Endothelial cell of umbilical vein (primary cell): ENCODE measurements at regions of chr15 and their contacts with region 1.

Region 1: DNA sequence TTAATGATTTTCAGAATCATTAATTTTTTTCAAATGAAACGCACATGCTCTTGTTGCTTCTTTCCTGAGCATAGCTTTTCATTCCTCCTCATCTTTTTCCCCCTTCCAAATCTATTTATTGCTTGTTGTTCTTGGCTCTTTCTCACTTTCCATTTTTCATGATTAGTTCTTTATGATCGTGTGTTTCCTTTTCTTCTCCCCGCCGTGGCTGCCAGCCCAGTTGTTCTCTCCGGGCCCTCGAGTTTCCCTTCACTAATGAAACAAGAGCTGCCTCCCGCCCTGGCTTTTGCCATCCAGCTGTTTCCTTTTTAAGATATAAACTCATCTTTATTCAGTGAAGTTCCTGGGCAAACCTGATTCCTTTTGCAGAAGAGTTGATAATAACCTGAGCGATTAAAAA is 170.2 kb upstream of the NR2F2 start:
- DNase-seq: peak; percentile 95
- H3K4me3 ChIP-seq: peak overlapping the region in 1 of 3 experiments; percentile 26
- H3K27ac ChIP-seq: peak overlapping the region; percentile 28
- H3K4me1 ChIP-seq: peaks cover 33% of the 10 kb centered on the region
- H3K27me3 ChIP-seq: no peaks in the 10 kb centered on the region
- CTCF ChIP-seq: no peak
- POLR2A ChIP-seq: no peak

Region 2: DNA sequence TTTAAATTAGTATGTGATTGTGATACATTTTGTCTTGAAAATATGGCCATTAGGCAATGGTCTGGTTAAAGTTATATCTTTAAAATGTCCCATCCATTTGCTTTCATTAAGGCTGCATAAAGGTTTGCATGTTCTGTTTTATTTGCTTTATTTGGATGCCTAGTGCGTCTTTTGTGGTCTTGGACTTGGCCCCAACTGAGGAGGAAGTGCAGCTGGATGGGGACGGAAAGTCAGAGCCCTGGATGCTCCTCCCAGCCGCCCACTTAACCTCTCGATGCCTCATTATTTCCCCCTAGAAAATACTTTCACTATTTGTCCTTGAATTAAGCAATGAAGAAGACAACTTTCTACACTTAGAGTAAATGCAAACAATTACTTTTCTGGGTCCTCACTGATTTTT is 1030.7 kb before region 1 on chr15:
- CTCF ChIA-PET with region 1: no interaction called
- POLR2A ChIA-PET with region 1: no interaction called
- dilution Hi-C with region 1: no loop called
- intact Hi-C with region 1: loop called (anchors 5 kb)
- DNase-seq: peak; percentile 16
- H3K4me3 ChIP-seq: no peak overlapping the region
- H3K27ac ChIP-seq: no peak overlapping the region
- H3K4me1 ChIP-seq: peaks cover 28% of the 10 kb centered on the region
- H3K27me3 ChIP-seq: no peaks in the 10 kb centered on the region
- CTCF ChIP-seq: no peak
- POLR2A ChIP-seq: no peak

Region 3: DNA sequence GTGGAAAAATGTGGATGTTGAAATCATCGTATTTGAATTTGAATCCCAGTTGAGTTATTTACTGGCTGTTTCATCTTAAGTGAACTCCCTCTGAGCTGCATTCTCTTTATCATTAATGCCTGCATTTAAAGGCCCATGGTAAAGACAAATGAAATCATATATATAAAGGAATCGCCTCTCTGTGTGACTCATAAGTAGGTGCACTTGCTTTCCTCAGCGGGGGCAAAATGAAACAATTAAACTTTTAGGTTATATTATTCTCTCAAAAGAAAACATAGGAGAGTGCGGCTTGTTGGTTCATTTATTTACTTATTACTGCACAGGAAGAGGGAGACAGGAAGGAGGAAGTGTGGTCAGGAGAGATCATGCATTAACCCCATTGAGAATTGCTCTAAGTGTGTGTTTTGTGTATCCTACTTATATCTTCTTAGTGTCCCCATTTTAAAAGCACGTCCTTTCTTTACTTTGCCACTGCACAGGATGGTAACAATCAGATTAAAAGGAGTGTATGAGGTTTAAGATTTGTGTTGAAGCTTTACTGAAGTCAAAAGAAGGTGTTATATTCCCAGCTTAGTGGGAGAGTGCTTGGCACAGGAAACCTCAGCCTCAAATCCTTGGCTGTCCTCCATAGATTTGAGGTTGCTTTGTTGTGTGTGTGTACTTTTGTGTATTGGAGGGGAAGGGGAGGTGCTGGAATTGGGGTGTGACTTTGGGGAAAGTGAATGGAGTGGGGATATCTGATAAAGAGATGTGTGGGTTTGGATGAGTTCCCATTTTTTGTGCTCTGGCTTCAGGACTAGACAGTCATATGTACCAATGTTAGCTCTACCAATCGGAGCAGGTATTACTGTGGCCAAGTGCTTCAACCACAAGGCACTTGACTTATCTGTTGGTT is 425.6 kb before region 1 on chr15:
- CTCF ChIA-PET with region 1: no interaction called
- POLR2A ChIA-PET with region 1: no interaction called
- dilution Hi-C with region 1: no loop called
- intact Hi-C with region 1: loop called (anchors 1 kb)
- DNase-seq: peak; percentile 96
- H3K4me3 ChIP-seq: no peak overlapping the region
- H3K27ac ChIP-seq: peak overlapping the region; percentile 70
- H3K4me1 ChIP-seq: peaks cover 28% of the 10 kb centered on the region
- H3K27me3 ChIP-seq: no peaks in the 10 kb centered on the region
- CTCF ChIP-seq: no peak
- POLR2A ChIP-seq: peak; percentile 50

Region 4: DNA sequence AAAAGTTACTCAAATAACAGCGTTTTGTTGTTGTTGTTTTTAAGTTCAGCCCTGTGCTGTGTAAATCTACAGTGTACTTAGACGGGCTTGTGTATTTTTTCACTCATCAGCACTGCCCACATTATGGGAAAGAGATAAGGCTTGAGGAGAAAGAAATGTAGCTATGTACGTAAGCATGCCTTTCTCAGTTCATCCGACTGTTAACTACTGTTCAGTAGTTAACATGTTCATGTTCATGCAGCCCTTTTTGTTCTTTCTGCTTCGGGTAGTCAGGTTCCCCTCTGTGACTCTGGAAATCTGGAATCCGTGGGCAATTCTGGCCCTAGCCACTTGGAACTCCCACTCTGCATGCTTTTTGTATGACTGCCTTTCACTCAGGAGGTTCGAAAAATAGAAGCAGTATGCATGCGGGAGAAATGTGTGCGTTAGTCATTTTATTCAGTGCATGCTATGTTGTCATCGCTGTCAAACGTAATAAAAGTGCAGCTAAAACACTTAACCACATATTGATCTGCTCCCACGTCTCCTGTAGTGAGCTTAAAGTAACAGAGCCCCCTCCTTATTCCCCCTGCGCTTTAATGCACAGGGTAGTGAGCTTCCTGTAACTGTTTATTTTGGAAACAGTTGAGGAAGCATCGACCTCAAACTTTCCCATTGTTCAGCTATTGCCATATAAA is 112.9 kb before region 1 on chr15:
- CTCF ChIA-PET with region 1: interaction called, 3 read pairs
- POLR2A ChIA-PET with region 1: no interaction called
- dilution Hi-C with region 1: no loop called
- intact Hi-C with region 1: loop called (anchors 1 kb)
- DNase-seq: peak; percentile 83
- H3K4me3 ChIP-seq: peak overlapping the region in 1 of 3 experiments; percentile 13
- H3K27ac ChIP-seq: no peak overlapping the region
- H3K4me1 ChIP-seq: peaks cover 14% of the 10 kb centered on the region
- H3K27me3 ChIP-seq: peaks cover 0 to 1% of the 10 kb centered on the region in 2 experiments
- CTCF ChIP-seq: no peak
- POLR2A ChIP-seq: no peak

Region 5: GRCh38 chr15:96066852-96067490 is 93.3 kb before region 1 on chr15:
- CTCF ChIA-PET with region 1: no interaction called
- POLR2A ChIA-PET with region 1: no interaction called
- dilution Hi-C with region 1: no loop called
- intact Hi-C with region 1: no loop called
- DNase-seq: no peak
- H3K4me3 ChIP-seq: no peak overlapping the region
- H3K27ac ChIP-seq: no peak overlapping the region
- H3K4me1 ChIP-seq: no peaks in the 10 kb centered on the region
- H3K27me3 ChIP-seq: no peaks in the 10 kb centered on the region
- CTCF ChIP-seq: no peak
- POLR2A ChIP-seq: no peak

Region 6: GRCh38 chr15:96150254-96150653 is 10.0 kb before region 1 on chr15:
- CTCF ChIA-PET with region 1: no interaction called
- POLR2A ChIA-PET with region 1: no interaction called
- dilution Hi-C with region 1: no loop called
- intact Hi-C with region 1: no loop called
- DNase-seq: no peak
- H3K4me3 ChIP-seq: no peak overlapping the region
- H3K27ac ChIP-seq: no peak overlapping the region
- H3K4me1 ChIP-seq: no peaks in the 10 kb centered on the region
- H3K27me3 ChIP-seq: no peaks in the 10 kb centered on the region
- CTCF ChIP-seq: no peak
- POLR2A ChIP-seq: no peak

Region 7: GRCh38 chr15:96234109-96234892 is 74.0 kb after region 1 on chr15:
- CTCF ChIA-PET with region 1: interaction called, 4 read pairs
- POLR2A ChIA-PET with region 1: no interaction called
- dilution Hi-C with region 1: no loop called
- intact Hi-C with region 1: loop called (anchors 1 kb)
- DNase-seq: no peak
- H3K4me3 ChIP-seq: no peak overlapping the region
- H3K27ac ChIP-seq: no peak overlapping the region
- H3K4me1 ChIP-seq: peaks cover 15% of the 10 kb centered on the region
- H3K27me3 ChIP-seq: no peaks in the 10 kb centered on the region
- CTCF ChIP-seq: no peak
- POLR2A ChIP-seq: no peak

Region 8: DNA sequence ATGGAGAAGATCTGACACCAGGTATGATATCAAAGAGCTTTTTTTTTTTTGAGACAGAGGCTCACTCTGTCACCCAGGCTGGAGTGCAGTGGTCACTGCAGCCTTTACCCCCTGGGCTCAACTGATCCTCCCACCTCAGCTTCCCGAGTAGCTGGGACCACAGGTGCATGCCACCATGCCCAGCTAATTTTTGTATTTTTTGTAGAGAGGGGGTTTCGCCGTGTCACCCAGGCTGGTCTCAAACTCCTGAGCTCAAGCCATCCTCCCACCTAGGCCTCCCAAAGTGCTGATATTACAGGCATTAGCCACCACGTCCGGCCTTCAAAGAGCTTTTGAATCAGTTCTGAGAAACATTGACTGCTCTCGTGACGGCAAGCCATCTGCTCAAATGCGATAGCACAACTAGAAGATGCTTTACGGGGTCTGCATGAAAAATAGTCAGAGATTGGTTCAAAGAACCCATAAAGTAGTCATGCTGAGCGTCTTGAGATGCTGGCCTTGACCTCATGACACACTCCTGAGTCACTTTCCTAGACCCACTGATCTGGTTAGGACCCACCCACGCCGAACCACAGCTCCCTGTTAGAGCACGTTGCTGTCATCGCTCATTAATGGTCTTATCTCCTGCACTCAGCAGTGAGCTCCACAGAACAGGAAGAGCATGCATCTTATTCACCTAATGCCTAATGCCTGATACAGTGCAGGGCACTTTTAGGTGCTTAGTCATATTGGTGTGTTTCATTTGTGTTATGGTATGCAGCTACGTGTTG is 113.2 kb after region 1 on chr15:
- CTCF ChIA-PET with region 1: no interaction called
- POLR2A ChIA-PET with region 1: no interaction called
- dilution Hi-C with region 1: no loop called
- intact Hi-C with region 1: loop called (anchors 1 kb)
- DNase-seq: peak; percentile 94
- H3K4me3 ChIP-seq: no peak overlapping the region
- H3K27ac ChIP-seq: peak overlapping the region; percentile 90
- H3K4me1 ChIP-seq: peaks cover 41% of the 10 kb centered on the region
- H3K27me3 ChIP-seq: no peaks in the 10 kb centered on the region
- CTCF ChIP-seq: no peak
- POLR2A ChIP-seq: peak; percentile 84

Region 9: DNA sequence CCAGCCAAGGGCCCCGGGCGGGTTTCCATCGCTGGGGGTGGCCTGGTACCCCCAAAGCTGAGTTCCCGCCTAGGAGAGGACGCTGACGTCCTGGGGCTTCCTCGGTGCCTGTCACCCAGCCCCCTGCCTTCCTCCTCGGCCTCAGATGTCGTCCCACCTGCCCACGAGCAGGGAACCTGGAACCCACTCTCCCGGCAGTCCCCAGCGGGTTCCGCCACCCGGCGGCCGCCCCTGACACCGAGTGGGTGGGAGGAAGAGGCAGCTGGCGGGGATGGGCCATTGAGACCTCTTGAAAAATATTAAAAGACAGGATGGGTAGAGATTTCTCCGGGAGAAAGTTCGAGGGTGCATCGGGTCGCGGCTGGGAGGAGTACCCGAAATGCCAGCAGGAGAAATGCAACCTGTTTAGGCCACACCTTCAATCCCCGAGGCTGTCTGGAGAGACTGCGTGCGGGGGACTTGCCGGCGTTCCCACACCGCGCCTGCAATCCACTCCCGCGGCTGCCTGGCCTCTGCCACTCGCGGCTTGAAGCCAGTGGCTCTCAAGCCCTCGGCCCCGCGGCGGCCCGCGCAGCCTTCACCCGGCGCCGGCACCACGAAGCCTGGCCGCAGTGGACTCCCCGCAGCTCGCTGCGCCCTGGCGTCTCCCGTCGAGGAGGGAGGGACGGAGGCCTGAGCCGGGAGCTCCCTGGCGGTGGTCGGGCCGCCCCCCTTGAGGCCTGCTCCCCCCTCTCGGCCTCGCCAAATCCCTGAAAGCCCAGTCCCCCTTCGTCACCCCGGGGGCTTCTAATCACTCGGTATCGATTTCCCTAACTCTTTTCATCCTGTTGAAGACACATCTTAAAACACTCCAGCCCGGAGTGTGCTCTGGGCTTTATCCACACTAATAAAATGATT is 161.6 kb after region 1 on chr15:
- CTCF ChIA-PET with region 1: interaction called, 15 read pairs
- POLR2A ChIA-PET with region 1: interaction called, 3 read pairs
- dilution Hi-C with region 1: no loop called
- intact Hi-C with region 1: loop called (anchors 2 kb)
- DNase-seq: peak; percentile 67
- H3K4me3 ChIP-seq: peak overlapping the region; percentile 18 to 89 (median 29)
- H3K27ac ChIP-seq: peak overlapping the region; percentile 85
- H3K4me1 ChIP-seq: peaks cover 74% of the 10 kb centered on the region
- H3K27me3 ChIP-seq: no peaks in the 10 kb centered on the region
- CTCF ChIP-seq: peak; percentile 7 to 27
- POLR2A ChIP-seq: no peak